GM10248 (cell line): ENCODE measurements at regions of chr1 and their contacts with region 1.

Region 1: GRCh38 chr1:8858888-8859706 is 19.4 kb downstream of the ENO1 start:
- DNase-seq: peak; percentile 46
- CTCF ChIP-seq: peak; percentile 65

Region 2: DNA sequence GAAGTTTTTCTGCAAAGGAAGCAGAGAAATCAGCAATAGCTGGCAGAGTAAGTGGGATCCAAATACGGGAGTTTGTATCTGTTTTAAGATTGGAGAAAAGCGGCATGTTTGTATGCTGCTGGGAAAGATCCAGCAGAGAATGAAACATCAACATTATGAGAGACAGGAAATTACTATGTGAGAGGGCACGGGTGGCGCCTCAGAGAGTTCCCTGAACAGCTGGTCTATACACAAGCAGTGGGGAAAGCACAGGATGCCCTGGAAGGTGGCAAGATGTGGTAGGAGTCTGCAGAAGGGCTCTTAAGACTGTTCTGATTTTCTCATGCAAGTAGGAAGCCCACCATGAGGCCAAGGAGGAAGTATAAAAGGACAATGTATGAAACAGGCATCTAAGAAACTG is 172.1 kb before region 1 on chr1:
- CTCF ChIA-PET with region 1: no interaction called
- POLR2A ChIA-PET with region 1: interaction called, 10 read pairs
- DNase-seq: no peak
- CTCF ChIP-seq: no peak

Region 3: GRCh38 chr1:8873506-8874229 is 14.6 kb after region 1 on chr1:
- CTCF ChIA-PET with region 1: interaction called, 32 read pairs
- POLR2A ChIA-PET with region 1: interaction called, 5 read pairs
- DNase-seq: no peak
- CTCF ChIP-seq: no peak

Region 4: GRCh38 chr1:8970870-8971337 is 111.8 kb after region 1 on chr1:
- CTCF ChIA-PET with region 1: no interaction called
- POLR2A ChIA-PET with region 1: no interaction called
- DNase-seq: peak; percentile 59
- CTCF ChIP-seq: no peak

Region 5: GRCh38 chr1:9069326-9070100 is 210.4 kb after region 1 on chr1 and contains the start of gene SLC2A5:
- CTCF ChIA-PET with region 1: no interaction called
- POLR2A ChIA-PET with region 1: no interaction called
- DNase-seq: peak; percentile 83
- CTCF ChIP-seq: no peak